GM23248 (cell line): ENCODE measurements at regions of chr15 and their contacts with region 1.

Region 1: DNA sequence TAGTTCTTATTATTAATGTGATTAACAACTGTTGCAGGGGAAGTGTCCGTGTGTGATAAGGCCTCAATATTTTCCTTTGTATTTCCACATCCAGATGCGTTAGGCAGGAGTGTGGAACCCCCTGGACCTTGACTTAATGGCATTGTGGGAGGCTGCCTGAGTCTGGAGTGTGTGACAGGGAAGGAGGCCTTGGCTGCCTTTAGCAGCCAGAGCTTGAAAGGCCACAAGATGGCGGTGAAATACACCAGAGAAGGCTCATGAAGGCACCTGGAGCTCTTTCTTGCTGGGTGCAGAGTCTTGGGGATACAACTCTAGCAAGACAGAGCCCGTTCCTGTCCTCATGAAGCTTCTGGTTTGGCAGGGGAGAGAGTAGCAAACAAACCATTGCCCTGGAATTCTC is 36.9 kb downstream of the POLR2M start:
- DNase-seq: no peak
- H3K4me3 ChIP-seq: no peak overlapping the region
- H3K27ac ChIP-seq: no peak overlapping the region
- H3K4me1 ChIP-seq: no peaks in the 10 kb centered on the region
- H3K27me3 ChIP-seq: no peaks in the 10 kb centered on the region

Region 2: DNA sequence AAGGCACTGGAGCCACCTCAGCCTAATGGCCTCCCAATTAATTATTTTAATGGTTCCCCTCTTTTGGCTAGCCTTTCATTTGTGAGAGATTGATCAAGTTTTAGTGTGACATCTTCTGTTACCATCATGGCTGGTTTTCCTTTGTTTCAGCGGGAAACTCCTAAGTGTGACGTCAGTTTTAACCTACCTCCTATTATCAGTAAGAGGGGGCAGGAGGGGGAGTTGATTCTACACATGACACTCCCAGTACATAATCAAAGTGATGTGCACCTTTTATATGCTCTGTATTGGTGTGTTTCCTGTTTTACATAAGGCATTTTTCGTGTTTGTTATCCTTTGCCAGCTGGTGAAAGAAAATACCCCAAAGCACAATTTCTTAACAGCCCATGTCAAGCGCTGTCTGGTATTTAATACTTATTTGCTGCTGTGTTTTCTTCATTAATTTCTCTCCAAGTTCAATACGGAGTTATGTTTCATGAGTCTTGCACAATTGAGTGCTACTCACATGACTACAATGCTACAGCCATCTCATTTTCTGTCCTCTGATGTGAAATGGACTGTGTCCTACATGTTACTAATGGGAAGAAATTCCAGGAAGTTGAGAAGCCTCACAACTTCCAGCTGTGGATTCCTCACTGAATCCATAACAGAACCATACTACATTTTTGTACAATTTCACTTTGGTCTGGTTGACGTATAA is 89.1 kb before region 1 on chr15:
- in situ Hi-C with region 1: no loop called
- DNase-seq: peak; percentile 86
- H3K4me3 ChIP-seq: peak overlapping the region; percentile 35
- H3K27ac ChIP-seq: peak overlapping the region; percentile 72
- H3K4me1 ChIP-seq: peaks cover 18% of the 10 kb centered on the region
- H3K27me3 ChIP-seq: no peaks in the 10 kb centered on the region

Region 3: DNA sequence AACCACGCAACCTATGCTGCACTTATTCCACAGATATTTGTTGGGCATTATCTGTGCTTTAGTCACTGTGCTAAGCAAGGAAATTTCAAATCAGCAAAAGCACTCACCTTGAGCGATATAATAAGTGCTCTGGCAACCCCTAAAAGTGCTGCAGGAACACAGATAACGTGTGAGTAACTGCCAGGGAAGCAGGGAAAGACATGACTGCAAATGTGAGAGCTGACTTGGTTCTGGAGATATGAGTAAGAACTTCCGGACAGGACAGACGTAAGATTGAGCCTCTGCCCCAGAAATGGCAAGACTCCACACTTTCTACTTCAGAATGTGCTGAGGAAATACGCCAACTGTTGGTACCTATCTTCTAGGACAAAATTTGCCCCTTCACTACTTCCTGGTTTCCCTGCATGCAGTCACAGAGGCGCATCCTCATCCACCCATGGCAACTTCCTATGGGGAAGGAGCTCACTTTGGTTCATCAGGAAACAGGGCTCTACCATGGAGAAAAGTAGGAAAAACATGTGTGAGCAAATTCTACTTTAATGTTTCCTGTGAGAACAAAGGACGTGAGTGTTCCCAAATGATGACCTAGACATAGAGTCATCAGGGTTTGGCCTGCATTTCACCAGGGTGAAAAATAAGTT is 436.4 kb after region 1 on chr15:
- in situ Hi-C with region 1: loop called (anchors 10 kb)
- DNase-seq: peak; percentile 65
- H3K4me3 ChIP-seq: no peak overlapping the region
- H3K27ac ChIP-seq: peak overlapping the region; percentile 59
- H3K4me1 ChIP-seq: peaks cover 12% of the 10 kb centered on the region
- H3K27me3 ChIP-seq: no peaks in the 10 kb centered on the region